A673 (cell line): ENCODE measurements at regions of chr12 and their contacts with region 1.

Region 1: GRCh38 chr12:91704446-91704845 is 441.2 kb downstream of the BTG1 start:
- DNase-seq: no peak
- H3K4me3 ChIP-seq: no peak overlapping the region
- H3K27ac ChIP-seq: no peak overlapping the region
- H3K4me1 ChIP-seq: no peaks in the 10 kb centered on the region
- H3K27me3 ChIP-seq: no peaks in the 10 kb centered on the region
- CTCF ChIP-seq: no peak

Region 2: GRCh38 chr12:91763654-91764370 is 59.4 kb after region 1 on chr12:
- CTCF ChIA-PET with region 1: no interaction called
- POLR2A ChIA-PET with region 1: no interaction called
- intact Hi-C with region 1: loop called (anchors 10 kb)
- DNase-seq: no peak
- H3K4me3 ChIP-seq: no peak overlapping the region
- H3K27ac ChIP-seq: no peak overlapping the region
- H3K4me1 ChIP-seq: no peaks in the 10 kb centered on the region
- H3K27me3 ChIP-seq: no peaks in the 10 kb centered on the region
- CTCF ChIP-seq: no peak